ENCODE measurements at regions of chr9 and their contacts with region 1.

Region 1: DNA sequence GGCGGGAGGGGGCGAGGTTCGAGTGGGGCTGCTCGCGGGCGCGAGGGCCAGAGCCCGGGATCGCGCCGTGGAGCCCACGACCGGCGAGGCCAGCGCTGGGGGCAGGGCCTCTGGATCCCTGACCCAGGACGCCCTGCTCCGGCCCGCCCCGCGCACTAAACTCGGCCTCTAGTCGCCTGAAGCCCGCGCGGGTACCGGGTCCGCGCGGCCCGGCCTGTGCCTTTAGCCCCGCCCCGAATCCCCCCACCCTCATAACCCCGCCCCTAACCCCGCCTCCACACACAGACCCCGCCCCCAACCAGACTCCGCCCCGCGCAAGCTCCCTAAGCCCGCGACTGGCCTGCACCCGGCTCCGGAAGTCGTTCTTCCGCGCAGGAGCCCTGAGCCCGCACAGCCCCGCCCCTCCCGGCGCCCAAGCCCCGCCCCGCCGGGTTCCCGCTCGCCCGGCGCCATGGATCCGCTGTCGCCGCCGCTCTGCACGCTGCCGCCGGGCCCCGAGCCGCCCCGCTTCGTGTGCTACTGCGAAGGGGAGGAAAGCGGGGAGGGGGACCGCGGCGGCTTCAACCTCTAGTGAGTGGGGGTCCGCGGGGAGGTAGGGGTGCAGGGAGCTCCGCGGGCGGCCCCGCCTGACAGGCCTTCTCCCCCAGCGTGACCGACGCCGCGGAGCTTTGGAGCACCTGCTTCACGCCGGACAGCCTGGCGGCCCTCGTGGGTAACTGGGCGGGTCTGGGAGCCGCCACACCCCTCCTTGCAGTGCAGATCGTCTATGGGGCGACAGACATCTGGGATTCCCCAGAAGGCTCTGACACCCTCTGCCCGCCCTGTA is at the start of gene PAXX:
- DNase-seq: peak; percentile 93
- H3K4me3 Mint-ChIP-seq: peak within 1 kb of the TSS; percentile 87
- H3K27ac Mint-ChIP-seq: peak within 1 kb of the TSS; percentile 84
- H3K4me1 Mint-ChIP-seq: peaks cover 24% of the 10 kb centered on the region
- H3K27me3 Mint-ChIP-seq: peaks cover 26% of the 10 kb centered on the region
- total RNA-seq, gene PAXX: 79.4 and 84.5 TPM in 2 replicates

Region 2: GRCh38 chr9:136799854-136800657 is 192.2 kb before region 1 on chr9:
- intact Hi-C with region 1: loop called (anchors 2 kb)
- DNase-seq: peak; percentile 61
- H3K4me3 Mint-ChIP-seq: peak overlapping the region; percentile 80
- H3K27ac Mint-ChIP-seq: peak overlapping the region; percentile 29
- H3K4me1 Mint-ChIP-seq: peaks cover 10% of the 10 kb centered on the region
- H3K27me3 Mint-ChIP-seq: peaks cover 23% of the 10 kb centered on the region

Region 3: GRCh38 chr9:136885950-136886578 is 106.1 kb before region 1 on chr9 and contains the start of gene TRAF2:
- intact Hi-C with region 1: loop called (anchors 1 kb)
- DNase-seq: peak; percentile 99
- H3K4me3 Mint-ChIP-seq: peak within 1 kb of the TSS; percentile 98
- H3K27ac Mint-ChIP-seq: peak within 1 kb of the TSS; percentile 93
- H3K4me1 Mint-ChIP-seq: peaks cover 44% of the 10 kb centered on the region
- H3K27me3 Mint-ChIP-seq: no peaks in the 10 kb centered on the region
- total RNA-seq, gene TRAF2: 67.4 and 76.3 TPM in 2 replicates

Region 4: DNA sequence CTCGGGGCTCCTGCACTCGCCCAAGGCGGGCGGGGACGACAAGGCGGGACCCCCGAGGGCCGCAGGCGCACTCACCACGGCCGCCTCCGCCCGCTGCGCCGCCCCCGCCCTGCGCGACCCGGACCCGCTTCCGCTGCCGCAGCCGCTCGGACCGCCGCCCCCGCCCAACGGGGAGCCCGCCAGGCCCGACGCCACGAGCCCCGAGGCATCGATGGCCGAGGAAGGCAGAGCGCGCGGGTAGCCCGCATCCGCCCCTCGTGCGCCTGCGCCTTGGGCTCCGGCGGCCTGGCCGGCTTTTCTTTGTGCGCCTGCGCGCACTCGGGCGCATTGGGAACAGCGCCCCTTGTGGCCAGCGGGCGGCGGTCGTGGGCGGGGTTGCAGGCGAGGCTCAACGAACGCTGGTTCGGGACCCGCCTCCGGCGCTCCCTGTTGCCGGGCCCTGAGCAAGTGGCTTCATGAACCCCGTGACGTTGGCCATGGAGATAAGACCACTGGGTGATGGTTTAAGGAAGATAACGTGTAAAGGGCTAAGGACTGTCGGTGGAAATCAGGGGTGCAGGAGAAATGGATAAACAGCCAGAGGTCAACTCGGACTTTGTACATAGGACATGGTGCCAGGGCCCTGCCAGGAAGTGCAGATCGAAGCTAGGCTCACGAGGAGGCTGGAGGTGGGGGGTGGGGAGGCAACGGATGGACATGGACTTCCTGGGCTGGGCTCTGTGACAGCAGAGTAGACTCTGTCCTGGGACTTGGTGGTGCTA is 47.5 kb before region 1 on chr9 and contains the starts of genes C8G and FBXW5:
- intact Hi-C with region 1: loop called (anchors 1 kb)
- DNase-seq: peak; percentile 97
- H3K4me3 Mint-ChIP-seq: peak within 1 kb of the TSS; percentile 83
- H3K27ac Mint-ChIP-seq: peak within 1 kb of the TSS; percentile 86
- H3K4me1 Mint-ChIP-seq: peaks cover 5% of the 10 kb centered on the region
- H3K27me3 Mint-ChIP-seq: no peaks in the 10 kb centered on the region
- total RNA-seq, gene C8G: 0.56 and 1.5 TPM in 2 replicates
- total RNA-seq, gene FBXW5: 92.5 and 96.2 TPM in 2 replicates

Region 5: GRCh38 chr9:136978073-136978864 is 13.9 kb before region 1 on chr9:
- intact Hi-C with region 1: loop called (anchors 1 kb)
- DNase-seq: peak; percentile 69
- H3K4me3 Mint-ChIP-seq: no peak overlapping the region
- H3K27ac Mint-ChIP-seq: no peak overlapping the region
- H3K4me1 Mint-ChIP-seq: peaks cover 6% of the 10 kb centered on the region
- H3K27me3 Mint-ChIP-seq: peaks cover 9% of the 10 kb centered on the region

Region 6: DNA sequence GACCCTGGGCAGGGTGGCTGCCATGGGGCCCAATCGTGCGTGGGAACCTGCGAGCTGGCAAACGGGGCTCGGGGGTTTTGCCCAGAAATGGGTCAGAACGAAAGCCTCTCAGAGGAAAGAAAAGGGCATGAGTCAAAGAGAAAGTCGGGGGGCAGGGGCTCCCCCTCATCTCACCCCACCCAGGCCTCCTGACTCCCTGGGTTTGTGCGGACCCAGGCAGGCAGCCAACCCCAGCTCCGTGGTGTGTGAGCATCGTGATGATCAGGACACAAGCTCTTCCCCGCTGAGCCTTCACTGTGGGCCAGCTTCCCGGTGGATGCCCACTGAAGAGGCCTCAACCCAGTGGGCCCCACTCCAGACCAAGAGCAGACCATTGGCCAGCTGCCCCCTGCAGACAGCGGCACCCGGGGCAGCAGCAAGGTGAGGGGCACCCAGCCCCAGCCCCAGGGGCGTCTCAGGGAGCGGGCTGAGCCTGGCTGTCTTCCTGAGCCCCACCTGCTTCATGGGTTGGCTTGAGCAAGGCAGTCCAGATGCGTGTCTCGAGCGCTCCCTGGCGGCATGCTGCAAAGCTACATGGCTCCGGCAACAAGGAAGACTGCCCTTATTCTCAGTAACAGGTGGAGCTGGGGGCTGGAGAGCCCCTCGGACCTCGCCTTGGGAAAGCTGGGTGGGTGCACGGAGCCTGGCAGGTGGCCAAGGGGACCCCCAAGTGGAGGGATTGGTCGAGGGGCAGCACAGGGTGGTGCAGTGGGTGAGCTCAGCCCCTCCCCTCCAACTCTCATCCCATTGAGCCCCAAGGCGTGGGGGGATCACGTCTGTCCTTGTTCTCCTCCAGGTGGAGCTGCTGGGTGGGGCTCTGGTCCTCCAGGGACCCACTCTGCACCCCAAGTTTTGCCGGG is 42.9 kb after region 1 on chr9:
- intact Hi-C with region 1: loop called (anchors 2 kb)
- DNase-seq: peak; percentile 79
- H3K4me3 Mint-ChIP-seq: peak overlapping the region; percentile 67
- H3K27ac Mint-ChIP-seq: peak overlapping the region; percentile 87
- H3K4me1 Mint-ChIP-seq: peaks cover 29% of the 10 kb centered on the region
- H3K27me3 Mint-ChIP-seq: no peaks in the 10 kb centered on the region

Region 7: GRCh38 chr9:137459147-137459600 is 467.0 kb after region 1 on chr9 and contains the start of gene NSMF:
- intact Hi-C with region 1: loop called (anchors 2 kb)
- DNase-seq: peak; percentile 95
- H3K4me3 Mint-ChIP-seq: peak within 1 kb of the TSS; percentile 7
- H3K27ac Mint-ChIP-seq: peak within 1 kb of the TSS; percentile 65
- H3K4me1 Mint-ChIP-seq: peaks cover 10% of the 10 kb centered on the region
- H3K27me3 Mint-ChIP-seq: no peaks in the 10 kb centered on the region
- total RNA-seq, gene NSMF: 57.2 and 58.9 TPM in 2 replicates